CD4-positive, alpha-beta T cell (primary cell): ENCODE measurements at regions of chr6 and their contacts with region 1.

Region 1: DNA sequence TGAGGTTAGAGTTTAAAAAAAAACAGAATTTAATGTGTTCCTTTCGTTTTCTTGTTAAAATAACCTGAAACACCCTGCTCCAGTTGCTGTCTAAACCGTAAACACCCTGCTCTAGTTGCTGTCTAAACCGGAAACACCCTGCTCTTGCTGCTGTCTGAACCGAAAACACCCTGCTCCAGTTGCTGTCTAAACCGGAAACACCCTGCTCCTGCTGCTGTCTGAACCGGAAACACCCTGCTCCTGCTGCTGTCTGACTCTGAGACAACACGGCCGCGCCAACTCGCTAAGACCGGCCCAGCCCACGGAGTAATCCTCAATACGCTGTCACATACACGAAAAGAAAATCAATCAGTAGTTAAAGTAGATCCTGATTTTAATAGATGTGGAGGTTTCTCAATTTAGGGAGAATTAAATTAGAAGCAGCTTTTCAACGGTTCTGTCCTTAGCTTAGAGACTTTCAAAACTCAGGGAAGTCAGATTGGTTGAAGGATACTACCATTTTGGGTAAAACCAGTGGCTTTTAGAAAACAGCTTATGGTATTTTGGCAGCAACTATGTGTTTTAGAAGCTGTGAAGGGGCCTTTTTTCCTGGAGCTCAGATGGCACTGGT is 98.3 kb downstream of the RAMACL start:
- DNase-seq: peak; percentile 63 to 96 (median 77)
- ATAC-seq: peak; percentile 95
- H3K4me3 ChIP-seq: peak overlapping the region; percentile 28
- H3K4me3 Mint-ChIP-seq: peak overlapping the region; percentile 55
- H3K27ac ChIP-seq: peak overlapping the region; percentile 74 to 85
- H3K27ac Mint-ChIP-seq: peak overlapping the region; percentile 95
- H3K4me1 ChIP-seq: peaks cover 36% of the 10 kb centered on the region
- H3K4me1 Mint-ChIP-seq: peaks cover 21% of the 10 kb centered on the region
- H3K27me3 ChIP-seq: no peaks in the 10 kb centered on the region
- H3K27me3 Mint-ChIP-seq: no peaks in the 10 kb centered on the region
- CTCF ChIP-seq: no peak

Region 2: DNA sequence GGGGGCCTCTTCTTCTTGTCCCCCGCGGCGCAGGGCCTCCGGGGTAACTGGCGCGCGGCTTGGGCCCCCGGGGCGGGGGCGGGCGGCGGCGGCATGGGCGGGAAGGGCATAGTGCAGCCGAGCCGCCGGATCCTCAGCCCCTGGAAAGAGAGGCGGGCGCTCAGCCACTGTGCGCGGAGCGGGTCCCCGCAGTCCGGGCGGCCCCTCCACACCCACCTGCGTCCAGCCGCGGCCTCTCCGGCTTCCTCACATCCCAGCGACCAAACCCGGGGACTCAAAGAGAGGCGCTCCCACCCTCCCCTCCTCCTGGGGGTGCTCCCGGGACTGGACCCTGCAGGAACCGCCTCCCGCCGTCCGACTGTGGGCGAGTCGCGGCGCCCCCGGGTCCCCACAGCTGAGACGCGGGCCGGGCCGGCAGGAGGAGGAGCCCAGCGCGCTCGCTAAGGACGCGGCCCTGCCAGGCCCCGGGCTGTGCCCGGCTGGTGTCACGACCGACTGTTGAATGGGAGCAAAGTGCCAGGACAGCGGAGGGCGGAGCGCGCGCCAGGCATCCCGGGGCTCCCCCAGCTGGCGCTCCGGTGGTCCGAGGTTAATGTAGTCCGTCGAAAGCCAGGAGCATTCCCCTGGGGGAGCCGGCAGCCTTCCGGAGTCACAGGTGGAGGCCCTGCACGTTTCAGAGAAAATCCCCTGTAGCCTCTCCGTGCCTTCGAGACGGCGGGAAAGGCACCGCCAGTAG is 180.0 kb before region 1 on chr6 and contains the start of gene PRR18:
- CTCF ChIA-PET with region 1: no interaction called
- POLR2A ChIA-PET with region 1: no interaction called
- intact Hi-C with region 1: no loop called
- DNase-seq: peak in 1 of 14 experiments; percentile 12
- ATAC-seq: peak; percentile 34
- H3K4me3 ChIP-seq: no peak within 1 kb of the TSS
- H3K4me3 Mint-ChIP-seq: peak within 1 kb of the TSS; percentile 15
- H3K27ac ChIP-seq: no peak within 1 kb of the TSS
- H3K27ac Mint-ChIP-seq: no peak within 1 kb of the TSS
- H3K4me1 ChIP-seq: peaks cover 12% of the 10 kb centered on the region
- H3K4me1 Mint-ChIP-seq: peaks cover 8% of the 10 kb centered on the region
- H3K27me3 ChIP-seq: peaks cover 29 to 59% of the 10 kb centered on the region in 2 experiments
- H3K27me3 Mint-ChIP-seq: peaks cover 59% of the 10 kb centered on the region
- CTCF ChIP-seq: no peak
- total RNA-seq, gene PRR18: not detected

Region 3: GRCh38 chr6:166419286-166419685 is 68.9 kb before region 1 on chr6:
- CTCF ChIA-PET with region 1: no interaction called
- POLR2A ChIA-PET with region 1: interaction called, 7 read pairs
- intact Hi-C with region 1: loop called (anchors 1 to 2 kb)
- DNase-seq: peak in 13 of 14 experiments; percentile 42 to 85 (median 57)
- ATAC-seq: peak; percentile 23
- H3K4me3 ChIP-seq: no peak overlapping the region
- H3K4me3 Mint-ChIP-seq: peak overlapping the region; percentile 35
- H3K27ac ChIP-seq: peak overlapping the region; percentile 47 to 75
- H3K27ac Mint-ChIP-seq: peak overlapping the region; percentile 98
- H3K4me1 ChIP-seq: peaks cover 82% of the 10 kb centered on the region
- H3K4me1 Mint-ChIP-seq: peaks cover 73% of the 10 kb centered on the region
- H3K27me3 ChIP-seq: no peaks in the 10 kb centered on the region
- H3K27me3 Mint-ChIP-seq: no peaks in the 10 kb centered on the region
- CTCF ChIP-seq: no peak